H1 (cell line): ENCODE measurements at regions of chr5 and their contacts with region 1.

Region 1: DNA sequence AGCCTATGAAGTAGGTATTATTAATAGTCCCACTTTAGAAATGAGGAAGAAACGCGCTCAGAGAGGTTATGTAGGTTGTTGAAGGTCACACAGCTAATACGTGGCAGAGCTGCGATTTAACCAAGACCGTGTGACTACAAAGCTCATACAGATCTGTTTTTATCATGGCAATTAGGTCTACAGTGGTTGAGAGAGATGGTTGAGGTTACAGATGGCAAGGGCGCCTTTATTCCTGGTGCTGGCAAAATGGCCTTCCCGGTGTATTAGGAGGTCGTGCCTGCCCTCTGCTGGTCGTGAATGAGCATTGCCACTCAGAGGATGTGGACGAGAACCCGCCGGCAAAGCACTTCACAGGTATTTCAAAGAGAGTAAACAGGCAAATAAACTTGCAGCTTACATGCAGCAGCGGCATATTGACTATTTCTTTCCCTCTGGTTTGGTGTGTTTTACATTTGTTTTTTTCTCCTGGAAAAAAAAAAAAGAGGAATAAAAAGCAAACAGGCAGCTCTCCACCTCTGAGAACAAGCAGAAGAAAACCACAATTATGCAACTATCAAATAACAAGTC is 65.3 kb upstream of the EGFLAM start:
- DNase-seq: peak; percentile 36 to 83
- H3K4me3 ChIP-seq: no peak overlapping the region
- H3K27ac ChIP-seq: no peak overlapping the region
- H3K4me1 ChIP-seq: no peaks in the 10 kb centered on the region
- H3K27me3 ChIP-seq: no peaks in the 10 kb centered on the region
- CTCF ChIP-seq: peak; percentile 90 to 97 (median 94)
- EP300 ChIP-seq: no peak
- POLR2A ChIP-seq: no peak
- RAD21 ChIP-seq: peak; percentile 99

Region 2: DNA sequence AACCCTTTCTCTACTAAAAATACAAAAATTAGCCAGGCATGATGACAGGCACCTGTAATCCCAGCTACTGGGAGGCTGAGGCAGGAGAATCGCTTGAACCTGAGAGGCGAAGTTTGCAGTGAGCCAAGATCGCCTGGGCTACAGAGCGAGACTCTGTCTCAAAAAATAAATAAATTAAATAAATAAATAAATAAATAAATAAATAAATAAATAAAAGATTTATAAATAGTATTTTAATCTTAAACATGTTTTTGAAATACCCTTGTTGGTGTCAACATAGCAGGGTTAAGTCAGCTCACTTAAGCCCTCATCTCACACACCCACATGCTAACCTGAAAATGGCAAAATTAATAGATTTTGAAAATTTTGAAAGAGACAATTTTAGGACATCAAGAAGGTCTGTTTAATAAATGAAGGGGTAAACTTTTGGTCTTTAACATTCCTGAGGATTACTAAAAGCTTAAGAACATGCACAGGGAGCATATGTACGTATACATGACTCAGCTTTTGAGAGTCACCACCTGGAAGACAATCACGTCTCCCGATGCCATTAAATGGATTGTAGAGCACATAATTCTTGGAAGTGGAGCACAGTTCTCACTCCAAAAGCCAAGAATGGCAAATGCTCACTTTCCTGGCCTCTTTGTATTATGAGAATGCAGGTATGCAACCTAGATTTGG is 555.8 kb before region 1 on chr5:
- CTCF ChIA-PET with region 1: no interaction called
- POLR2A ChIA-PET with region 1: no interaction called
- DNase-seq: no peak
- H3K4me3 ChIP-seq: no peak overlapping the region
- H3K27ac ChIP-seq: no peak overlapping the region
- H3K4me1 ChIP-seq: peaks cover 0 to 3% (median 0%) of the 10 kb centered on the region in 4 experiments; a peak in 1 of 7 replicates
- H3K27me3 ChIP-seq: no peaks in the 10 kb centered on the region
- CTCF ChIP-seq: no peak
- EP300 ChIP-seq: no peak
- POLR2A ChIP-seq: no peak
- RAD21 ChIP-seq: no peak

Region 3: GRCh38 chr5:37722236-37723146 is 470.6 kb before region 1 on chr5:
- CTCF ChIA-PET with region 1: interaction called, 13 read pairs
- POLR2A ChIA-PET with region 1: no interaction called
- DNase-seq: no peak
- H3K4me3 ChIP-seq: no peak overlapping the region
- H3K27ac ChIP-seq: no peak overlapping the region
- H3K4me1 ChIP-seq: peaks cover 0 to 6% (median 2%) of the 10 kb centered on the region in 4 experiments; a peak in 3 of 7 replicates
- H3K27me3 ChIP-seq: no peaks in the 10 kb centered on the region
- CTCF ChIP-seq: no peak
- EP300 ChIP-seq: no peak
- POLR2A ChIP-seq: no peak
- RAD21 ChIP-seq: no peak

Region 4: GRCh38 chr5:37825334-37825915 is 367.7 kb before region 1 on chr5:
- CTCF ChIA-PET with region 1: interaction called, 15 read pairs
- POLR2A ChIA-PET with region 1: no interaction called
- DNase-seq: no peak
- H3K4me3 ChIP-seq: no peak overlapping the region
- H3K27ac ChIP-seq: no peak overlapping the region
- H3K4me1 ChIP-seq: peaks cover 0 to 5% (median 2%) of the 10 kb centered on the region in 4 experiments; a peak in 3 of 7 replicates
- H3K27me3 ChIP-seq: peaks cover 0 to 3% (median 0%) of the 10 kb centered on the region in 4 experiments; a peak in 3 of 7 replicates
- CTCF ChIP-seq: no peak
- EP300 ChIP-seq: no peak
- POLR2A ChIP-seq: no peak
- RAD21 ChIP-seq: no peak; a peak in 1 of 4 replicates

Region 5: GRCh38 chr5:37837414-37838032 is 355.6 kb before region 1 on chr5:
- CTCF ChIA-PET with region 1: interaction called, 36 read pairs
- POLR2A ChIA-PET with region 1: no interaction called
- DNase-seq: peak in 1 of 2 experiments; percentile 90
- H3K4me3 ChIP-seq: peak overlapping the region; percentile 35 to 59 (median 48)
- H3K27ac ChIP-seq: no peak overlapping the region
- H3K4me1 ChIP-seq: peaks cover 8 to 31% (median 16%) of the 10 kb centered on the region in 4 experiments
- H3K27me3 ChIP-seq: peaks cover 59 to 98% (median 92%) of the 10 kb centered on the region in 4 experiments
- CTCF ChIP-seq: peak in 2 of 3 experiments; percentile 70 to 73; a peak in 3 of 4 replicates
- EP300 ChIP-seq: no peak
- POLR2A ChIP-seq: no peak
- RAD21 ChIP-seq: peak; percentile 78 to 84

Region 6: DNA sequence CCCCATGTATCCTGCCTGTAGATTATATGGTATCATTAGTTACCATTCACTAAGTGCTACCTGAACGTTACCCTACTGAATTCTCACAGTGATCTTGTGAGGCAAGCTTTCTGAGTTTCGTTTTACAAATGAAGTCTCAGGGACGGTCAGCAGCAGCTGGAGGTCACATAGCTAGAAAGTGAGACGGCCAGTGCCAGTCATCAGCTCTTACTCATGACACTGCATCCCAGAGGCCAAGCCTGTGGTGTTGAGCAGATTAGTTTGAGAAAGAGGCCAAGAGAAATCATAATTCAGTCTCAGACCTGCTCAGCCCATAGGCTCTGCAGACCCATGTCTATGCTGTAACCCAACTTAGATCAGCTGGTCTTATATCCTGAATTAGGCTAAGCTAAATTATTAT is 30.5 kb before region 1 on chr5:
- CTCF ChIA-PET with region 1: interaction called, 10 read pairs
- POLR2A ChIA-PET with region 1: no interaction called
- DNase-seq: no peak
- H3K4me3 ChIP-seq: no peak overlapping the region
- H3K27ac ChIP-seq: no peak overlapping the region
- H3K4me1 ChIP-seq: peaks cover 3 to 8% (median 7%) of the 10 kb centered on the region in 4 experiments
- H3K27me3 ChIP-seq: no peaks in the 10 kb centered on the region; a peak in 1 of 7 replicates
- CTCF ChIP-seq: no peak
- EP300 ChIP-seq: no peak
- POLR2A ChIP-seq: no peak
- RAD21 ChIP-seq: no peak